Natural killer cell (primary cell): ENCODE measurements at regions of chr22 and their contacts with region 1.

Region 1: DNA sequence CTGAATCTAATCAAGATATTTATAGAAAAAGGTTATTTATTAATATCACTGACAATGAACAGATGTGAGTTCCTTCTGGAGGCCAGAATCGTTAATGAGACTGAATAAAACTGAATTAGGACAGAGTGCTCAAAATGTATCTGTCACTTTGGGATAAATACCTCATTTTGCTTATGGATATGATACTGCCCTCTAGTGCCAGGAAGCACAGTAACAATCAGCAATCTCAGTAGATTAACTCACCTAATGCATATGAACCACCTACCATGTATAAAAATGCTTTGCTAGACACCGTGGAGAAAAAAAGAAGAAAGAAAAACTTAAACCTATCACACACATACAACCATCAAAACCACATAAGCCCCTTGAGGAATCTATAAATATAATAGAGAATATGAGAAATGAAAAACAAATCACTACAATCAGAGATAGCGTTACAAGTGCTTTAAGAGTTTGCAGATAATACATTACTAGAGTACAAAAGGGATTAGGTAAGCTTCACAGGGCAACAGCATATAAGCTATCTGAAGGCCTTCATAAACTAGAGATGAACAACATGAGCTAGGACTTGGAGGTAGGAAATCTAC is 117.4 kb downstream of the SGSM3 start:
- DNase-seq: peak in 1 of 2 donors; percentile 68
- ATAC-seq: peak; percentile 55 to 72 (median 71)
- H3K4me3 ChIP-seq: no peak overlapping the region
- H3K4me3 Mint-ChIP-seq: no peak overlapping the region
- H3K27ac ChIP-seq: no peak overlapping the region
- H3K27ac Mint-ChIP-seq: no peak overlapping the region
- H3K4me1 ChIP-seq: no peaks in the 10 kb centered on the region
- H3K4me1 Mint-ChIP-seq: peaks cover 23 to 26% of the 10 kb centered on the region in 2 donors
- H3K27me3 ChIP-seq: no peaks in the 10 kb centered on the region
- H3K27me3 Mint-ChIP-seq: no peaks in the 10 kb centered on the region
- CTCF ChIP-seq: peak; percentile 75

Region 2: DNA sequence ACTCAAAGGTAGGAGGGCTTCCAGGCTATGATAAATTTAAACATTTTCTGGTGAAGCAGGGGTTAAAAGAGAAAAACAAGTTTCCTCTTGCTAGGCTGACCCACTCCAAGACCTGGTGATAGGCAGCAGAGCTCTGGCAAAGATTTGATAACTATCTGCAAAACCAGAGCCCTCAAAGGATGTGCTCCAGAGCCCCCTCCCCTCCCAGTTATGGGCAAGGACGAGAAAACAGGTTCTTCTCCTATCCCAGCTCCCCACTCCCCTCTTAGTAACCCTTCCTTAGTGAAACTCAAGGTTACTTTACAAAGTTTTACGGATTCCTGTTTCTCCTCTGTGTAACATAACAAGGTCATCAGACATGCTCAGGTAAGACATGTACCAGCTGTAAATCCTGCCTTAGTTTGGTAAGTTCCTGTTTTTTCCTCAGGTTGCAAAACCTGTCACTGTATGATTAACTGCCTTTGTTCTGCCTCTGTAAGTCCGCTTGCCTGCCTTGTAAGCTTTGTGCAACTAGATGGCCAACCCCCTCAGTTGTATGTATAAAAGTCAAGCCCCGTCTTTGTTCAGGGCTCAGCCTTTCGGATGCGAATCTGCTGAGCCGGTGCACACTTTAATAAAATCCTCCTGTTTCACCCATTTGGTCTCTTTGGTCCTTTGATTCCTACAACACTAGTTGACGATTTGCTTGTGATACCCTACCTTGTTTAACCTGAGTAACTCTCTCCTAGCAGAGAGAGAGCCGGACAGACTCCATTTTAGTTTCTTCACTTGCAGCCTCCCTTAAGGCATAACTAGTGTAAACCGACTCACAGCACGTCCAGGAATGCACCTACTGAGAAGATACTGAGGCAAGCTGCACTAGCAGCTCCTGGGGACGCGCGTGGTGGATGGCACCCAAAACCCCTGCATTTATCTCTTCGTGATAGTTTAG is 1376.9 kb before region 1 on chr22:
- intact Hi-C with region 1: no loop called
- DNase-seq: no peak
- ATAC-seq: no peak
- H3K4me3 ChIP-seq: no peak overlapping the region
- H3K4me3 Mint-ChIP-seq: no peak overlapping the region
- H3K27ac ChIP-seq: no peak overlapping the region
- H3K27ac Mint-ChIP-seq: peak overlapping the region in 1 of 2 donors; percentile 22
- H3K4me1 ChIP-seq: peaks cover 7% of the 10 kb centered on the region
- H3K4me1 Mint-ChIP-seq: peaks cover 24 to 26% of the 10 kb centered on the region in 2 donors
- H3K27me3 ChIP-seq: no peaks in the 10 kb centered on the region
- H3K27me3 Mint-ChIP-seq: no peaks in the 10 kb centered on the region
- CTCF ChIP-seq: no peak

Region 3: GRCh38 chr22:40436505-40437451 is 51.0 kb before region 1 on chr22:
- intact Hi-C with region 1: loop called (anchors 1 kb)
- DNase-seq: peak in 1 of 2 donors; percentile 82
- ATAC-seq: peak; percentile 67 to 72 (median 70)
- H3K4me3 ChIP-seq: no peak overlapping the region
- H3K4me3 Mint-ChIP-seq: peak overlapping the region; percentile 65
- H3K27ac ChIP-seq: peak overlapping the region; percentile 45
- H3K27ac Mint-ChIP-seq: peak overlapping the region; percentile 85 to 86
- H3K4me1 ChIP-seq: peaks cover 53% of the 10 kb centered on the region
- H3K4me1 Mint-ChIP-seq: peaks cover 39 to 45% of the 10 kb centered on the region in 2 donors
- H3K27me3 ChIP-seq: no peaks in the 10 kb centered on the region
- H3K27me3 Mint-ChIP-seq: no peaks in the 10 kb centered on the region
- CTCF ChIP-seq: peak; percentile 74

Region 4: DNA sequence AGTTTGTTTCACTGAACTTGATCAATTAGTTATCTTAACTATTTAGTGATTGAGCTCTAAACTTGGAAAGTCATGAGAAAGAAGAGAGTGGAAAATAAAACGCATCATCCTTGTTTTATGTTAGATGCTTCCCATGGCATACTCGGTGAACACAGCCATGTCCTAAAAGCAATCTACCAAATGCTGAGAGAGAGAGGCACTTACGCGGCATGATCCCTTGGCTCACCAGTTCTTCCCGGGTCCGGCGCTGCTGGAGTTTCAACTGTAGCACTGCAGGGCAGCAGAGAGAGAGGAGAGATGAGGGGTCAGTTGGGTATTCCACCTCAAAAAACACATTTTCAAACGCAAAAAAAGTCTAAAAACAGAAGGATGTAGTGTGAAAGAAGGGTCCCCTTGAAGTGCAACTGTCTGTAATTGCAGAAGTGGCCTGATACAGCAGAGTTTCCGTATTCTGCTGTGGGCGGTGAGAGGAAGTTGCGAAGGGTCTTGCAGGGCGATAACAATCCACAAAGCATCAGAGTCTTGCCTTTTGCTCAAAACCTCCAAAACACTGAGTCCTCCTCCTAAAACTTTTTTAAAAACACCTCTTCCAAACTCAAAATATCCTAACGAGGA is 24.6 kb before region 1 on chr22:
- intact Hi-C with region 1: loop called (anchors 2 kb)
- DNase-seq: peak; percentile 26 to 74
- ATAC-seq: peak; percentile 75 to 80 (median 78)
- H3K4me3 ChIP-seq: peak overlapping the region; percentile 53
- H3K4me3 Mint-ChIP-seq: peak overlapping the region; percentile 91
- H3K27ac ChIP-seq: peak overlapping the region; percentile 72
- H3K27ac Mint-ChIP-seq: peak overlapping the region; percentile 89 to 94
- H3K4me1 ChIP-seq: peaks cover 28% of the 10 kb centered on the region
- H3K4me1 Mint-ChIP-seq: peaks cover 52 to 60% of the 10 kb centered on the region in 2 donors
- H3K27me3 ChIP-seq: no peaks in the 10 kb centered on the region
- H3K27me3 Mint-ChIP-seq: no peaks in the 10 kb centered on the region
- CTCF ChIP-seq: no peak